Left colon (tissue), 2 donors: ENCODE measurements at regions of chr3 and their contacts with region 1.

Region 1: DNA sequence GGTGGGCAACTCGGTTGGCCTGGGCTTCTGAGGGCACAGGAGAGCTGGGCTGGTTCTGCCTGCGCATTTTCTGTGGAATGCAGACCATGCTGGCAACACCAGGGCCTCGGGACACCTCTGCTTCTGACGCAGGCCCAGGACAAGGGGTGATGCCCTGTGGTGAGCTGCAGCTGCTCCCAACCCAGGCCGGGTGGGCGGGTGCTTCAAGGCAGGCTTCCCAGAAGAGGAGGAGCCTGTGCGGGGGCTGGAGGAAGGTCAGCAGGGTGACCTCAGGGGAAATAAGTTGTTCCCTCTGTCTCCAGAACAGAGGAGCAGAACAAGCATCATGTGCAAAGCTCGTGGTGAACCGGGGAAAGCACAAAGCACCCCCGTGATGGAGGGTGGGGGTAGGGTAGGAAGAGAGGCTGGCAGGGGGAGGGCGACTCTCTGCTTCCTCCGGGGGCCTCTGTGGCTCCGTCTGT is 11.0 kb upstream of the PLXNA1 start:
- DNase-seq: peak; percentile 37 to 76
- ATAC-seq: peak; percentile 35

Region 2: DNA sequence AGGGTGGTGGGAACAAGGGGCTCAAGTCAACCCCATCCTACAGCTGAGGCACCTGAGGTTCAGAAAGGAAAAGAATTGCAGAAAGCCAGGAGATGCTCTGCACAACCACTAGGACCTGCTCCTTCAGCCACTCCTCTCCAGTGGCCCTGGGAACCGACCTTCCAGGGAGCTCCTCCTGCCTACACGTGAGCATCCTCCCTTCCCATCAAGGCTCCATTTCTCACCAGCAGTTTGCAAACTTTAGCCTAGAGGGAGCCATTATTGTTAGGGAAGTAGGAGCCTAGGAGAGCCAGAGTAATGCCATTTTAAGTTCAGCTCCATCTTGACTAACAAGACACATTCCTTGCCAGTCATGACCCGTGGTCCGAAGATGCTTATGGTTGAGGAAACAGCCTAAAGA is 279.1 kb before region 1 on chr3:
- intact Hi-C with region 1: no loop called
- DNase-seq: no peak
- ATAC-seq: no peak

Region 3: DNA sequence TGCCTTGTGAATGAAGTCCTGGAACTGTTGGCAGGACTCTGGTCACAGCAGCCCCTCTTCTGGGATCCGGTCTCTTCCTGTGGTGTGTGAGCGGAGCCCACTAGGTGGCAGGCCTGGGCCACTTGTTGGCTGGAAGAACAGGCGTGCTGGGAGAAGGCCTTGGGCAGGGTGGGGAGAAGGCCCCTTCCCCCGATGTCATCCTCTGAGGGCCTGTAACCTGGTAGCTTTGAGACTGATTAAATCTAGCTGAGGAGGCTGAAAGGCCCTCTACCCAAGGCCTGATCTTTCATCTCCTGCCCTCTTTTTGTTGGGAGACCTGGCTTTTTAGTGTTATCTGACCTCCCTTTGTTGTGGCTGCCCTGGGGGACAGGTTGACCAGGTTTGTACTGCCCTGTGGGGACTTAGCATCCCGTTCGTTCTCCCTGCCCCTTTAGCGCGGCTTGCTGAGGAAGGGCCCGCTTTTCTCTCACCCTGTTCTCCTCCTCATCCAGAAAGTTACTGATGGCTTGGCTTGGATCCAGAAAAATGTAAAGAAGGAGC is 219.5 kb before region 1 on chr3:
- intact Hi-C with region 1: loop called in 1 of 2 experiments (anchors 10 kb)
- DNase-seq: peak; percentile 59 to 82
- ATAC-seq: peak; percentile 89

Region 4: DNA sequence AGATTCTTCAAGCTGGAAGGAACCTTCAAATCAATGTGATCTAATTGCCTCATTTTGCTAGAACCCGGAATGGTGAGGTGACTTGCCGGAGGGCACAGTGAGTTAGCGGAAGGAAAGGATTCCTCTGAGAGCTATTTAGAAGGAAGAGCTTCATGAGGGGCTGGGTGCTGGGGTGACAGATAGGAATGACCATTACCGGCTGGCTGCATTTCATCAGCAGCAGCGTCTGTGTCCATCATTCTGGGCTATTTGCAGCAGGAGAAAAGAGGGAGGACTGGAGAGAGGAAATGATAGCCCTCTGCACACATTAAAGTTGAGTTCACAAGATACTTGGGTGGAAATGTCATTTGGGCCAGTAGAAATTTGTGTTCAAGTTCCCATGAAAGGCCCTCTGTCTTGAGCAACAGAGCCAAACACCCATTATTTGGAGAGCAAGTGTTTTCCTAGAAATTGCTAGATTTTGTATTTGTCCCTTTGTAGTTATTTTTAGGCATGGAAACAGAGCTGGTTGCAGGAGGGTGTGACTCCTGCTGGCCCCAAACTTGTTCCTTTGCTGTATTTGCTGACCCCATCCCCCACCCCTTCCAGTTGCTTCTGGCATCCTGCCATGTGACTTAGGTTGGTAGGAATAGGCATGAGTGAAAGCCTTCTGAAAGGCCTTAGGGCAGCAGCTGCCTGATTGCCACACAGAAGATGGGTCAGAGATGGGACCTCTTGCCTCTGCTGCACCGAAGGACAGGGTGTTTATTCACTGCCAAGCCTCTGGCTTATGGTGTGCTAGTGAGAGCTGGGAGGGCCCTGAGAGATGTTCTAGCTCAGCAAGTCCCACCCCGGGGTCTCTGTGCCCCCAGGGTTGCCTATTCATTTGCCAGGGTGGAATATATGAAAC is 76.5 kb before region 1 on chr3:
- intact Hi-C with region 1: no loop called
- DNase-seq: no peak
- ATAC-seq: no peak